Activated naive CD4-positive, alpha-beta T cell treated with anti-CD3 and anti-CD28 coated beads for 36 hours (primary cell): ENCODE measurements at regions of chr1 and their contacts with region 1.

Region 1: DNA sequence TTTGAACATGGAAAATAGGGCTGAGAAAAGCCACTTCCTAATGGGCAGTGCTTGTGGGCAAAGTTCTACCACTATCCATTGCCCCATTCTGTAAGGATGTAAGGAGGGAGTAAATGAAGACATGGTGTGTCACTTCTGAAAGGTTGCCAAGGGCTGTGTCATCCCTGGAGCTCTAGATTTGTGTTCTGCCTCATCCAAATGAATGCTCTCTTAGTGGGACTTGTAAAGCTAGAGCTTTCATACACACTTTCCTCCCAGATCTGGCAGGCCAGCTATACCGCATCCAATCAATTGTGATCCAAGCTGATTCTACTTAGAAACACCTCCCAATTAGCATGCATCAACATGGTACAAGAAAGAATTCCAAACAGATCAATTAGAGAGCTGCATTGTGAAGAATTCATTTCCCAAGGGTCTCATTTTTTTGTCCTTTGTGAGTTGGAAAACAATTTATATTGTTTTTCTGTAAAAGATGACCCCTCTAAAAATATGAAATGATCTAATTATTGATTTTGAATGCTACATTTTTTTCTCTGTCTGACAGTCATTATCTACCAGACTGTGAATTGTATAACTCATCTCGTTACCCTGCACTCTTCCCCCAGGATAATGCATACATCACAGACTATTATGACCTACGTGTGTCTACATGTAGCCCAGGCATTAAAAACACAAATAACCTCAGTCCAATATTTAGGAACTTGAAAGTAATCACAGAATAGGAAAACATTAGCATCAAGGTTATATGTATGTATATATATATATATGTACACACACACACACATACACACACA is 117.1 kb upstream of the DUSP10 start:
- DNase-seq: no peak
- H3K4me3 Mint-ChIP-seq: no peak overlapping the region
- H3K27ac Mint-ChIP-seq: no peak overlapping the region
- H3K4me1 Mint-ChIP-seq: peaks cover 11% of the 10 kb centered on the region
- H3K27me3 Mint-ChIP-seq: no peaks in the 10 kb centered on the region

Region 2: GRCh38 chr1:221548942-221549341 is 310.1 kb before region 1 on chr1:
- CTCF ChIA-PET with region 1: no interaction called
- intact Hi-C with region 1: loop called (anchors 5 kb)
- DNase-seq: no peak
- H3K4me3 Mint-ChIP-seq: no peak overlapping the region
- H3K27ac Mint-ChIP-seq: no peak overlapping the region
- H3K4me1 Mint-ChIP-seq: no peaks in the 10 kb centered on the region
- H3K27me3 Mint-ChIP-seq: no peaks in the 10 kb centered on the region

Region 3: GRCh38 chr1:221874285-221875003 is 15.4 kb after region 1 on chr1:
- CTCF ChIA-PET with region 1: no interaction called
- intact Hi-C with region 1: no loop called
- DNase-seq: no peak
- H3K4me3 Mint-ChIP-seq: no peak overlapping the region
- H3K27ac Mint-ChIP-seq: no peak overlapping the region
- H3K4me1 Mint-ChIP-seq: peaks cover 9% of the 10 kb centered on the region
- H3K27me3 Mint-ChIP-seq: peaks cover 14% of the 10 kb centered on the region